OCI-LY7 (cell line): ENCODE measurements at regions of chr3 and their contacts with region 1.

Region 1: DNA sequence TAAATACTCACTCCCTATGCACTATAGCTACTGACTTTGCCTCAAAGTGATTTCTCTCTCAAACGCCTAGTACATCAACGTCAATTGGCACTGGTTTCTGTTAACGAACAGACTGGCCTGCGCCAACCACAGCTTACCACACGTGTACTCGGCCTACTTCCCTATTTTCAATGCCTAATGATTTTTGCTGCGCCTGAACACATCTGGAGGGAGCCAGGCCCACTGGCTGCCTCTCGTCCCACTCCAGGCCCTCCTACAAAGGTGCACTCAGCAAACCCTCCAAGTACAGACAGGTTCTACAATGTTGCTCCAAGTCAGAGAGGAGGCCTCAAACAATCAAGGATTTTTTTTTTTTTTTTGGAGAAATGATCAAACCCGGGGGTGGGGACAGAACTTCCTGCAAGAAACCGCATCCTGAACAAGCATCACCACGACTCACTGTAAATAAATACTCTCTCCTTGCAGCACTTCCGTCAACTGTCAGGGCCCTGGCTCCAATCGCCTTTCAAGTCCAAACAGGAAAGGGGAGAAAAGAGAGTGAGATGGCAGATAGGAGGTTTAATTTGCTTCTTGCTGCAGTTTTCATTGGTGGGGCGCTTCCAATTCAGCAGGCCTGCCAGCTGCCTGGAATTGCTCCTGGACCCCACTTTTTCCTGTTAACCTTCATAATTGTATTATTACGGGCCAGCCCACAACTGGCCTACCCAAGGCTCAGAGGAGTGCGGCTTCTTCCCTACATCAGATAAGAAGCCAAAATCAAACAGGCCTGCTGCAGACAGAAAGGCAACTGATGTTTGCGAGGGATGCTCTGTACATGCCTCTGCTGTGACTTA is 139.3 kb downstream of the FOXP1 start:
- DNase-seq: peak; percentile 94
- H3K4me3 ChIP-seq: peak overlapping the region; percentile 61
- H3K27ac ChIP-seq: peak overlapping the region; percentile 99
- H3K4me1 ChIP-seq: peaks cover 98% of the 10 kb centered on the region
- CTCF ChIP-seq: no peak

Region 2: GRCh38 chr3:70684701-70685100 is 759.5 kb before region 1 on chr3:
- CTCF ChIA-PET with region 1: no interaction called
- POLR2A ChIA-PET with region 1: no interaction called
- intact Hi-C with region 1: no loop called
- DNase-seq: no peak
- H3K4me3 ChIP-seq: no peak overlapping the region
- H3K27ac ChIP-seq: no peak overlapping the region
- H3K4me1 ChIP-seq: no peaks in the 10 kb centered on the region
- CTCF ChIP-seq: no peak

Region 3: DNA sequence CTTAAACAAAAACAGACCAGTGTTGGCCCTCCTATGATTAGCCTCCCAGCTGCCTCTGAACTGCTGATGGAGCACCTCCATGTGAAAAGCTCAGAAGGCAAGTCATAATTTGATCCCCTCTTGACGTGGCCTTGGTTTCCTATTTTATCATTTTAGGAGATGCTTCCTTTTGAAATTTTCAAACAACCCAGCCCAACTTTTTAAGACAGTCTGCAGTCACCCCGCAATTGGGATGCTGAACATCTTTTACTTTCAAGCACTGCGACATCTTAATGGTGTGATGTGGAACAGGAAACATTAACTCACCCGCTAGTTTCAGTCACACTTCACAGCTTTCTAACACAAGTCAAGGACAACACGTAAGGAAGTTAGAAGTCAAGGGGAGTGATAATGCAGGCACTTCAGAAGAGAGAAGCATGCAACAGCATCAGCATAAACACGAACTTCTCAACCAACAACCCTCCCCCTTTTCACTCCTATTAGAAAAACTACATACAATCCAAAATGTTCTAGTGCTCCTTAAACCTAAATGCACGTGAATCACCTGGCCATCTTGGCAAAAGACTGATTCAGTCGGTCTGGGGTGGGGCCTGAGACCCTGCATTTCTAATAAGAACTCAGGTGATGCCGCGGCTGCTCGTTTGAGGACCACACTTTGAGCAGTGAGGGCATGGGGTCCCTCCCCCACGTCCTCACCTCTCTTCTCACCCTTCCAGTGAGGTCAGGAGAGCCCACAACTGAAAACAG is 22.3 kb before region 1 on chr3:
- CTCF ChIA-PET with region 1: no interaction called
- POLR2A ChIA-PET with region 1: interaction called, 21 read pairs
- intact Hi-C with region 1: loop called (anchors 1 kb)
- DNase-seq: peak; percentile 90
- H3K4me3 ChIP-seq: peak overlapping the region; percentile 64
- H3K27ac ChIP-seq: peak overlapping the region; percentile 98
- H3K4me1 ChIP-seq: peaks cover 93% of the 10 kb centered on the region
- CTCF ChIP-seq: no peak

Region 4: DNA sequence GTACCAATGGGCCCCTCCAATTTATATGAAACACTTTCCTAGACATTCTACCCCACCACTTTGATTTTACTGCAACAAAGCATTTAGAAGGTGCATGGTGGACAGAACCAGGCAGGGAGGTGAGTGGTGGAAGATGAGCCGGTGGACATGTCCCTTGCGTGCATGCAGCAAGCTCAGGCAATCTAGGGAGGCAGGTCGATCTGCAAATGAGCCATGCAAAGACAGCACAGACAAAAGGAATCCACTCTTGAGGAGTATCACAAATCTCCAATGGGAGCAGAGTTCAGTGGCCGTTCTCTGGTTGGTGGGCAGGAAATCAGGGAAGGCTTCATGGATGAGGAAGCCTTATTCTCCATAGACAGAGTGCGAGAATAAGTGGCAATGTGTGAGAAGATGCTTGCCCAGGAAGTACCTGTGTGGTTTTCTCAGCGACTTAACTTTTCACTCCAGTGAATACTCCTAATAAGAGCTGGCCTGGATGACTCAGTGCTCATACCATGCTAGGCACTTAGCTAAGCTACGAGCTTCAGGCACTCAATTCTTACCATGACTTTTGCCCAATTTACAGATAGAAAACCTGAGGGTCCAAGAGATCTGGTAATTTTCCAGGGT is 13.2 kb before region 1 on chr3:
- CTCF ChIA-PET with region 1: interaction called, 4 read pairs
- POLR2A ChIA-PET with region 1: interaction called, 21 read pairs
- intact Hi-C with region 1: no loop called
- DNase-seq: no peak
- H3K4me3 ChIP-seq: no peak overlapping the region
- H3K27ac ChIP-seq: no peak overlapping the region
- H3K4me1 ChIP-seq: peaks cover 44% of the 10 kb centered on the region
- CTCF ChIP-seq: no peak